ENCODE measurements at regions of chr1 and their contacts with region 1.

Region 1: DNA sequence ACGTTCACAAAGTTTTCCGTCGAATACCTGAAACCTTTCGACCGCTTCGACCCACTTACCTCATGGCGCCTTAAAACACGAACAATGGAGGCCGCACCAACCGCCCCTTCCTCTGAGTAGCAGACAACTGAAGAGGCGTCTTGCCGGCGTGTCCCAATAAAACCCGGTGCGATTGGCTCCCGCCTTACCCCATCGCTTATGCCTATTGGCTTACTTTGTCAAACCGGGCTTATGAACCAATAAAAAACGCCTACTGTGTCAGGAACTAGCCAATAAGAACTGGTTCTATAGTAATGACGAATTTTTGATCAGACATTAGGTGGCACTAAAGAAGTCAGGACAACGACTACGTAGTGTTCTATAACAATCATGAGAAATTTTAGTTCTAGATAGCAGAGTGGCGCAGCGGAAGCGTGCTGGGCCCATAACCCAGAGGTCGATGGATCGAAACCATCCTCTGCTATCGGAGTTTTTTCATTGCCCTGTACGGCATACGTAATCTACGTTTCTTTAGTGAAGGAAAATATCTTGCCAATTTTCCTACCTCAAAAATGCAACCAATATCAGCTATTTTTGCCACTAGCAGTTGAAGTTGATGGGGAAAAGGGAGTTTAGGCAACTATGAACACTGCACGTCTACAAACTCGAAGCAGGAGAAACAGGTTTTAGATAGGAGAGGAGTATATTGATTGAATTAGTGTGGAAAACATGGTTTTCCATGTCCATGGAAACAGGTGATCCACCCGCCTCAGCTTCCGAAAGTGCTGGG is at the start of gene ILF2:
- DNase-seq: peak; percentile 100
- ATAC-seq: peak; percentile 95
- H3K4me3 ChIP-seq: peak within 1 kb of the TSS; percentile 99
- H3K27ac ChIP-seq: peak within 1 kb of the TSS; percentile 85
- H3K4me1 ChIP-seq: peaks cover 4% of the 10 kb centered on the region; the same call in 1 of the 2 replicates
- H3K27me3 ChIP-seq: no peaks in the 10 kb centered on the region
- CTCF ChIP-seq: peak; percentile 13 to 47 (median 32); a peak in 4 of 6 replicates
- EP300 ChIP-seq: peak in 1 of 2 experiments; percentile 83; a peak in 1 of 4 replicates
- POLR2A ChIP-seq: peak; percentile 94
- RAD21 ChIP-seq: no peak
- polyA plus RNA-seq, gene ILF2: 444 to 455 TPM

Region 2: GRCh38 chr1:153261281-153262069 is 409.6 kb before region 1 on chr1:
- CTCF ChIA-PET with region 1: no interaction called
- POLR2A ChIA-PET with region 1: no interaction called
- RAD21 ChIA-PET with region 1: no interaction called
- SMC1A ChIA-PET with region 1: no interaction called
- in situ Hi-C with region 1: no loop called
- intact Hi-C with region 1: no loop called
- DNase-seq: no peak
- ATAC-seq: peak; percentile 26
- H3K4me3 ChIP-seq: peak overlapping the region; percentile 50; the same call in 1 of the 2 replicates
- H3K27ac ChIP-seq: no peak overlapping the region
- H3K4me1 ChIP-seq: peaks cover 15% of the 10 kb centered on the region
- H3K27me3 ChIP-seq: 0 out of 4 replicates have a peak, but pooled peaks cover 0 to 4% of the 10 kb centered on the region in 2 experiments
- CTCF ChIP-seq: no peak
- EP300 ChIP-seq: no peak
- POLR2A ChIP-seq: no peak
- RAD21 ChIP-seq: no peak

Region 3: DNA sequence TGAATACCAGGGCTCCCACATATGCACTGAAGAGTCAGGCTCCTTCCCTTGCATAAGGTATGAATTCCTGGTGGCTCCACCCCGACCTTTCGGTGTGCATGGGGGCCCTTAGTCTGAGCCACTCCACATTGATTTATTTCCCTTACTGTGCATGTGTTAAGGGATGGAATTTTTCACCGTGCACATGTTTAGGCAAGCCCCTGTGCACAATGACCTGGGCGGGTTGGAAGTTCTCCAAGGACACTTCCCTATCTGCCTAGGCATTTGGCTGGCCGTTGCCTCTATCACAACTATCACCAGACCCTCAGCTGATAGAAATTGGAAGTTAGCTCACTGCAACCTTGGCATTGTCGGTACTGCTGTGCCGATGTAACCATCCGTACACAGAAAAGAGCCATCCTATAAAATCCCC is 144.9 kb before region 1 on chr1:
- CTCF ChIA-PET with region 1: no interaction called
- POLR2A ChIA-PET with region 1: no interaction called
- RAD21 ChIA-PET with region 1: no interaction called
- SMC1A ChIA-PET with region 1: no interaction called
- in situ Hi-C with region 1: no loop called
- intact Hi-C with region 1: no loop called
- DNase-seq: no peak
- ATAC-seq: no peak
- H3K4me3 ChIP-seq: no peak overlapping the region
- H3K27ac ChIP-seq: no peak overlapping the region
- H3K4me1 ChIP-seq: no peaks in the 10 kb centered on the region
- H3K27me3 ChIP-seq: 0 out of 4 replicates have a peak, but pooled peaks cover 0 to 3% of the 10 kb centered on the region in 2 experiments
- CTCF ChIP-seq: no peak
- EP300 ChIP-seq: no peak
- POLR2A ChIP-seq: no peak
- RAD21 ChIP-seq: no peak

Region 4: GRCh38 chr1:153612755-153613331 is 58.2 kb before region 1 on chr1 and contains the start of gene S100A16:
- CTCF ChIA-PET with region 1: no interaction called
- POLR2A ChIA-PET with region 1: no interaction called
- RAD21 ChIA-PET with region 1: no interaction called
- SMC1A ChIA-PET with region 1: no interaction called
- in situ Hi-C with region 1: no loop called
- intact Hi-C with region 1: no loop called
- DNase-seq: no peak
- ATAC-seq: no peak
- H3K4me3 ChIP-seq: no peak within 1 kb of the TSS
- H3K27ac ChIP-seq: no peak within 1 kb of the TSS
- H3K4me1 ChIP-seq: peaks cover 14% of the 10 kb centered on the region
- H3K27me3 ChIP-seq: no peaks in the 10 kb centered on the region
- CTCF ChIP-seq: no peak
- EP300 ChIP-seq: no peak
- POLR2A ChIP-seq: no peak
- RAD21 ChIP-seq: no peak
- polyA plus RNA-seq, gene S100A16: not detected

Region 5: DNA sequence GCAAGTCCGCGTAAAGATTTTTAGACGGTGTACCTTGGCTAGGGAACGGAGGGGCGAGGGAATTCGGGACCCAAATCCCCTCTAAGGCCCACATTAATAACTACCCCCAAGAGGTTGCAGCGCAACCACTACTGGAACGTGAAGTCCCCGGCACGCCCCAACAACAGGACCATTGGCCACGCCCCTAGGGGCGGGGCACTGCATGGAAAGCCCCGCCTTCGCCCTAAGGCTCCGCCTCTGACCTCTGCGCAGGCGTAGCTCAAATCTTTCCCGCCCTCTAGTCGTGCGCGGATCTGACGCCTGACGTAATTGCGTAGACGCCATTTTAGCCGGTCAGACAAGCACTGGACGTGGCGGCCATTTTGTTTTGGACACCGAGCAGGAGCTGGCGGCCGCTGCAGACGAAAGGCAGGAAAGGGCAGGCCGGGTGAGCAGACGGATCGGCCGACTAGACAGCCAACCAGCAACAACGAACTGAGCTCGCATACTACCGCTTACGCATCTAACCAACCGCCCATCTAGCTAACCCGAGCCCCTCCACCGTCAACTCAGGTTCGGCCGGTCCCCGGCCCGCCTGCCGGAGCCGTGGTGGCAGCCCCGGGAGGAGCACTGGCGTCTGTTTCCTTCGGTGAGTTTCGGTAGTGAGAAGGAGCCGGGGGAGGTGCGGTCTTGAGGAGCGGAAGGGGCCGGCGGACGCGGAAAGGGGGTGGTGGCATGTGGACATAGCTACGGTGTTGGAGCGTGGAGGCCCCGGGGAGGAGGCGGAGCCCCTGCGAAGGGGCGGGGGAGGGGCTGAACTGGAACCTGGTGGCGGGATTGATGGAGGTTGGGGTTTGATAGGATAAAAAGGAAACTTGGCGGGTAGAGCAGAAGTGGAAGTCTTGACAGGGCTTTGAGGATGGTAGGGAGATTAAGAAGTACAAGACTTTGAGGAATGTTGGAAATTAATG is 37.1 kb before region 1 on chr1 and contains the start of gene CHTOP:
- CTCF ChIA-PET with region 1: interaction called, 9 read pairs
- POLR2A ChIA-PET with region 1: interaction called, 4 read pairs
- RAD21 ChIA-PET with region 1: interaction called, 4 read pairs
- SMC1A ChIA-PET with region 1: interaction called, 8 read pairs
- in situ Hi-C with region 1: no loop called
- intact Hi-C with region 1: loop called (anchors 2 kb)
- DNase-seq: peak; percentile 95
- ATAC-seq: peak; percentile 96
- H3K4me3 ChIP-seq: peak within 1 kb of the TSS; percentile 89
- H3K27ac ChIP-seq: peak within 1 kb of the TSS; percentile 98
- H3K4me1 ChIP-seq: peaks cover 6% of the 10 kb centered on the region
- H3K27me3 ChIP-seq: no peaks in the 10 kb centered on the region
- CTCF ChIP-seq: no peak
- EP300 ChIP-seq: no peak
- POLR2A ChIP-seq: peak; percentile 98
- RAD21 ChIP-seq: no peak
- polyA plus RNA-seq, gene CHTOP: 8.4 to 15.9 TPM

Region 6: GRCh38 chr1:153742411-153743142 is 71.5 kb after region 1 on chr1:
- CTCF ChIA-PET with region 1: interaction called, 84 read pairs
- POLR2A ChIA-PET with region 1: interaction called, 5 read pairs
- RAD21 ChIA-PET with region 1: interaction called, 12 read pairs
- SMC1A ChIA-PET with region 1: interaction called, 55 read pairs
- in situ Hi-C with region 1: loop called (anchors 5 kb)
- intact Hi-C with region 1: loop called (anchors 1 kb)
- DNase-seq: peak; percentile 80
- ATAC-seq: peak; percentile 87
- H3K4me3 ChIP-seq: peak overlapping the region; percentile 7; the same call in 1 of the 2 replicates
- H3K27ac ChIP-seq: peak overlapping the region; percentile 77
- H3K4me1 ChIP-seq: peaks cover 32% of the 10 kb centered on the region
- H3K27me3 ChIP-seq: no peaks in the 10 kb centered on the region
- CTCF ChIP-seq: no peak
- EP300 ChIP-seq: peak; percentile 67 to 86; a peak in 2 of 4 replicates
- POLR2A ChIP-seq: no peak
- RAD21 ChIP-seq: no peak

Region 7: DNA sequence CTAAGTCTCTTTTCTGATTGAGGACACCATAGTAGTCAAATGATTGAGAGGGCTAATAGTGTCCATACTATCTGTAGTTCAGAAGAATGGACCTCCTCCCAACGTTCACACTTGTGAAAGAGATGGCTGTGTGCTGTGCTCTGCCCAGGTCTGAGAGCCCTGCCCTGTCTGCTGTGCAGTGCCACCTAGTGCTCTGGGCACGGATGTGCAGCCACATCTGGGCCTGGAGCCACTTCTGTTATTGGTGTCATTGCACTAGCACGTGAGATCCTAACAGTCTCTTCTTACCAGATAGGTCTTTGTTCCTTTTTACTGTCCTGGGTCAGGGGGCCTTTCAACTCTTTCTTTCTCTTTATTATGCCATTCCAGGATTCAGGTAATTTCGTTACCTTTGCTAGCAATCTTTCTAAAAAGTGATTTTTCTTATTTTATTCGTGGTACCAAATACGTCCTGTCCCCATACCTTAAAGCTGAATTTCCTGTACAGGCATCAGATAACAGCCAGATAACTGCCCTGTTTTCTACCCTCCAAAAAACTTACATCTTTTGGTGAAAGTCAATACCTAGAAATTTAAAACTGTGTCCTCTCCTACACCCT is 78.5 kb after region 1 on chr1:
- CTCF ChIA-PET with region 1: interaction called, 84 read pairs
- POLR2A ChIA-PET with region 1: interaction called, 5 read pairs
- RAD21 ChIA-PET with region 1: interaction called, 12 read pairs
- SMC1A ChIA-PET with region 1: interaction called, 55 read pairs
- in situ Hi-C with region 1: loop called (anchors 5 kb)
- intact Hi-C with region 1: no loop called
- DNase-seq: peak; percentile 48
- ATAC-seq: peak; percentile 100
- H3K4me3 ChIP-seq: no peak overlapping the region
- H3K27ac ChIP-seq: no peak overlapping the region
- H3K4me1 ChIP-seq: no peaks in the 10 kb centered on the region; the same call in 1 of the 2 replicates
- H3K27me3 ChIP-seq: no peaks in the 10 kb centered on the region
- CTCF ChIP-seq: peak; percentile 97 to 99 (median 99); a peak in 5 of 6 replicates
- EP300 ChIP-seq: no peak
- POLR2A ChIP-seq: no peak
- RAD21 ChIP-seq: peak; percentile 82